Psoas muscle (tissue), 8 donors: ENCODE measurements at regions of chr17 and their contacts with region 1.

Region 1: GRCh38 chr17:31015639-31016038 is 44.8 kb downstream of the RNF135 start:
- DNase-seq: no peak
- ATAC-seq: no peak
- H3K4me3 ChIP-seq: no peak overlapping the region
- H3K27ac ChIP-seq: no peak overlapping the region
- H3K4me1 ChIP-seq: no peaks in the 10 kb centered on the region
- H3K27me3 ChIP-seq: no peaks in the 10 kb centered on the region
- CTCF ChIP-seq: no peak

Region 2: GRCh38 chr17:30894236-30894635 is 121.4 kb before region 1 on chr17:
- intact Hi-C with region 1: no loop called
- DNase-seq: no peak
- ATAC-seq: no peak
- H3K4me3 ChIP-seq: no peak overlapping the region
- H3K27ac ChIP-seq: no peak overlapping the region
- H3K4me1 ChIP-seq: no peaks in the 10 kb centered on the region
- H3K27me3 ChIP-seq: no peaks in the 10 kb centered on the region
- CTCF ChIP-seq: no peak

Region 3: DNA sequence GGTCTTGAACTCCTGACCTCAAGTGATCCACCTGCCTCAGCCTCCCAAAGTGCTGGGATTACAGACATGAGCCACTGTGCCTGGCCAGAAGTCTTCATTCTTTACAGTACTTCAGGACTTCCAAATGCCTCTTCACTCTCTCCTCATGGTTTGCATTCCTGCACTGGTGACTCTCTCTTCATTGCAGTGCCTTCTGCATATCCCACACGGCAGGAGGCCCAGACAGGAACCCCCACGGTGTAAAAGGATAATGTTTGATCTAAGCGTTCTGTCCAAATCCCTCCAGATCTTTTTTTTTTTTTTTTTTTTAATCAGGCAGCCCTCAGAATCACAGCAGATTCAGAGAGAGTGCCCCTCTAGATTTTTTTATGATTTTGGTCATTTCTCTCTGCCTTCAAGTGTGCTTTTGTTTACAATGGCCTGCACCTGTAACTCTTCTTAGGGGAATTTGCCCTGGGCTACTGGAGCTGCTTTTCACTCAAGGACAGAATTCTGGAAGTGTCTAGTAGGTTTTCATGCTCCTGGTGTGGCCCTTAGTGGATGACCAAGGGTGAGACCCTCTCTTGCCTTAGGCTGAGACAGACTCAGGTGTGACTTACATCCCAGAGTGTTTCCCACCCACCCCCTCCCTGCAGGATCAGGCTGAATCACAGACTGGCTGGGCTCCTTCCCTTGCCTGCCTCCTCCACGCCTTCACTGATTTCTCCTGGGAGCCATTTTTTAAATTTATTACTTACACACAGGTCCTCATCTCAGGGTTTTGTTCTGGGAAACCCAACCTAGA is 59.3 kb after region 1 on chr17:
- intact Hi-C with region 1: no loop called
- DNase-seq: no peak
- ATAC-seq: no peak
- H3K4me3 ChIP-seq: no peak overlapping the region
- H3K27ac ChIP-seq: no peak overlapping the region
- H3K4me1 ChIP-seq: no peaks in the 10 kb centered on the region
- H3K27me3 ChIP-seq: no peaks in the 10 kb centered on the region
- CTCF ChIP-seq: no peak

Region 4: GRCh38 chr17:31216053-31216751 is 200.6 kb after region 1 on chr17:
- intact Hi-C with region 1: loop called (anchors 2 to 5 kb)
- DNase-seq: no peak
- ATAC-seq: peak in 3 of 4 donors; percentile 57 to 84 (median 58)
- H3K4me3 ChIP-seq: no peak overlapping the region
- H3K27ac ChIP-seq: no peak overlapping the region
- H3K4me1 ChIP-seq: peaks cover 8% of the 10 kb centered on the region
- H3K27me3 ChIP-seq: no peaks in the 10 kb centered on the region
- CTCF ChIP-seq: peak; percentile 65